ENCODE measurements at regions of chr17 and their contacts with region 1.

Region 1: DNA sequence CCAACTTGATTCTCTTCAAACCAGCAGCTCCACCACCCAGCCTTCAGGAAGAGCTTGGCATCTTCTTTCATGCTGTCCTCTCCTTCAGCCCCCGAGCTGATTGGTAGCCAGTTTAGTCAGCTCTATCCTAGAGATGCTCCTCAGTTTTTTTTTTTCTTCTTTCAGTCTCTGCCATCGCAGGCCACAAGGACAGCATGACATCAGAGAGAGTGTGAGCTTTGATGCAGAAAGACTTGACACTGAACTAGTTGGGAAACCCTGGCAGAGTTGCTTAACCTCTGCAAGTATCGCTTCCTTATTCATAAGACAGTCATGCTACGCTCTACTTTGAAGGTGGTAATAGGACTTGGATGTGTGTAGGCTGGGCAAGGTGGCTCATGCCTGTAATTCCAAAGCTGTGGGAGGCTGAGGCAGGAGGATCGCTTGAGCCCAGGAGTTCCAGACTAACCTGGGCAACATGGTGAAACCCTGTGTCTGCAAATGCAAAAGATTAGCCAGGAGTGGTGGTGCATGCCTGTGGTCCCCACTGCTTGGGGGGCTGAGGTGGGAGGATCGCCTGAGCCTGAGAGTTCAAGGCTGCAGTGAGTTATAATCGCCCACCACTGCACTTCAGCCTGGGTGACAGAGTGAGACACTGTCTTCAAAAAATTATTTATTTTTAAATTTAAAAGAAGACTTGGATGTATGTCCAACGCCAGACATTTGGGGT is 2.6 kb downstream of the CD300LB start:
- DNase-seq: peak in 1 of 2 donors; percentile 31
- ATAC-seq: peak; percentile 17 to 34
- H3K4me3 ChIP-seq: no peak overlapping the region
- H3K27ac ChIP-seq: no peak overlapping the region
- H3K4me1 ChIP-seq: no peaks in the 10 kb centered on the region
- H3K27me3 ChIP-seq: no peaks in the 10 kb centered on the region
- CTCF ChIP-seq: no peak
- POLR2A ChIP-seq: no peak

Region 2: DNA sequence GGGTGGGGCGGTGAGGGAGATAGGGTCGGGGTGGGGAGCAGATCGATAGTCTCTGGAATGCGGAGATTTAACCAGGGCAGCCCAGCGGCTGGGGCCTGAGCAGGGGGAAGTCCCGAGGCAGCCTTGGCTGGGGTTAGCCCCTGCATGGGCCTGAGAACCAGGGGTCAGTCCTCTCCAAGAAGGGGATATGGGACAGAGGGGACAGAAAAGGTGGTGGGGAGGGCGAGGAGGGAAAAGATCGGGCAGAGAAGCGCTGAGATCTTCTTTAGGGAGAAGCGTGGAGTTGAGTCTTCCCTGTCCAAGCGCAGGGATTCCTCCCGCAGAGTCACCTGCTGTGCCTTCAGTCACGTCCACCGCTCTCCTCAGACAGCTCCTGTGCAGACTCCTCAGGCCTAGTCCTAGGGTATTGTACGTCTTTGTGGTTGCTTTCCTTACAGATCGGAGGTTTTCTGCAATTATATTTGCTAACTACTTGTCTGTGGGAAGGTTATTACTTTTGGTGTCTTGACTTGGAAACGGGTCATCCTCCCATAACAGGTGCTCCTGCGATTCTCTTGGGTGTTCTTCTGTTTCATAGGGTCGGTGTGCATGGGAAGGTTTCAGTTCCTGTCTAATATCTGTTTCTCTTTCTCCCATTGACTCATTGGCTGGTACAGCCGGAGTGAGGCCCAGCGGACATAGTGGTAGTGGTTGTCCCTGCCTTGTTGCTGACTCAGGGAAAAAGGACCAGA is 61.3 kb before region 1 on chr17:
- in situ Hi-C with region 1: no loop called
- intact Hi-C with region 1: loop called (anchors 5 kb)
- DNase-seq: no peak
- ATAC-seq: peak in 1 of 2 donors; percentile 32
- H3K4me3 ChIP-seq: peak overlapping the region in 1 of 4 donors; percentile 30
- H3K27ac ChIP-seq: no peak overlapping the region
- H3K4me1 ChIP-seq: no peaks in the 10 kb centered on the region
- H3K27me3 ChIP-seq: no peaks in the 10 kb centered on the region
- CTCF ChIP-seq: no peak
- POLR2A ChIP-seq: no peak

Region 3: GRCh38 chr17:74478420-74479100 is 50.1 kb before region 1 on chr17:
- in situ Hi-C with region 1: no loop called
- intact Hi-C with region 1: no loop called
- DNase-seq: no peak
- ATAC-seq: no peak
- H3K4me3 ChIP-seq: no peak overlapping the region
- H3K27ac ChIP-seq: no peak overlapping the region
- H3K4me1 ChIP-seq: no peaks in the 10 kb centered on the region
- H3K27me3 ChIP-seq: no peaks in the 10 kb centered on the region
- CTCF ChIP-seq: no peak
- POLR2A ChIP-seq: no peak

Measured in gastrocnemius medialis (tissue), 4 donors.